ENCODE measurements at regions of chr14 and their contacts with region 1.

Region 1: GRCh38 chr14:101809671-101810514 is 48.4 kb downstream of the PPP2R5C start:
- DNase-seq: peak; percentile 96
- H3K4me3 ChIP-seq: peak overlapping the region; percentile 51 to 67 (median 66)
- H3K27ac ChIP-seq: peak overlapping the region; percentile 96 to 98 (median 97)
- H3K4me1 ChIP-seq: peaks cover 0 to 50% (median 40%) of the 10 kb centered on the region in 4 donors
- H3K27me3 ChIP-seq: no peaks in the 10 kb centered on the region
- CTCF ChIP-seq: no peak
- EP300 ChIP-seq: peak in 3 of 4 donors; percentile 5 to 94 (median 80)
- POLR2A ChIP-seq: peak; percentile 63 to 71

Region 2: DNA sequence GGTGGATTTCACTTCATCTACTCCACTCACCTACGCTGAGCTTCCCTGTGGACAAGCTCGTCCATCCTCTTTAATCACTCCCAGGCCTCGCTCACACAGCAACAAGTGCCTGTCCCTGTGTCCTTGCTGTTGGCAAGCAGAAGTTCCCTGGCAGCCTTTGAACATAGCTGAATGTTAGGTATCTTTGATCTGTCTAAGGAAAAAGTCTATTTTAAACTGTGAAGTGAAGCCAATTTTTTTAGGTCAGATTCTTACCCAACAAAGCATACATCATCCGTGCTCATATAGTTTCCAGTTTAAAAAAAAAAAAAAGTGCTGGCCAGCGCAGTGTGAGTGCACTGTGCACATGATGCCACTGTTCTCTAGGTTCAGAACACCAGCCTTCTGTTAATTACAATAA is 12.0 kb before region 1 on chr14:
- intact Hi-C with region 1: loop called (anchors 2 kb)
- DNase-seq: no peak
- H3K4me3 ChIP-seq: no peak overlapping the region
- H3K27ac ChIP-seq: peak overlapping the region; percentile 77 to 86 (median 83)
- H3K4me1 ChIP-seq: peaks cover 0 to 41% (median 22%) of the 10 kb centered on the region in 4 donors
- H3K27me3 ChIP-seq: no peaks in the 10 kb centered on the region
- CTCF ChIP-seq: no peak
- EP300 ChIP-seq: peak in 2 of 4 donors; percentile 17 to 53
- POLR2A ChIP-seq: no peak

Region 3: GRCh38 chr14:101876555-101876938 is 66.7 kb after region 1 on chr14:
- intact Hi-C with region 1: loop called (anchors 5 kb)
- DNase-seq: peak; percentile 95
- H3K4me3 ChIP-seq: peak overlapping the region in 1 of 4 donors; percentile 3
- H3K27ac ChIP-seq: peak overlapping the region; percentile 15 to 85 (median 76)
- H3K4me1 ChIP-seq: peaks cover 0 to 77% (median 58%) of the 10 kb centered on the region in 4 donors
- H3K27me3 ChIP-seq: no peaks in the 10 kb centered on the region
- CTCF ChIP-seq: no peak
- EP300 ChIP-seq: peak; percentile 97 to 100 (median 98)
- POLR2A ChIP-seq: no peak

Region 4: GRCh38 chr14:102105369-102105768 is 295.5 kb after region 1 on chr14:
- intact Hi-C with region 1: no loop called
- DNase-seq: peak; percentile 3
- H3K4me3 ChIP-seq: no peak overlapping the region
- H3K27ac ChIP-seq: no peak overlapping the region
- H3K4me1 ChIP-seq: no peaks in the 10 kb centered on the region
- H3K27me3 ChIP-seq: no peaks in the 10 kb centered on the region
- CTCF ChIP-seq: no peak
- EP300 ChIP-seq: no peak
- POLR2A ChIP-seq: no peak

Measured in sigmoid colon (tissue), 7 donors.